Naive thymus-derived CD4-positive, alpha-beta T cell (primary cell): ENCODE measurements at regions of chr3 and their contacts with region 1.

Region 1: DNA sequence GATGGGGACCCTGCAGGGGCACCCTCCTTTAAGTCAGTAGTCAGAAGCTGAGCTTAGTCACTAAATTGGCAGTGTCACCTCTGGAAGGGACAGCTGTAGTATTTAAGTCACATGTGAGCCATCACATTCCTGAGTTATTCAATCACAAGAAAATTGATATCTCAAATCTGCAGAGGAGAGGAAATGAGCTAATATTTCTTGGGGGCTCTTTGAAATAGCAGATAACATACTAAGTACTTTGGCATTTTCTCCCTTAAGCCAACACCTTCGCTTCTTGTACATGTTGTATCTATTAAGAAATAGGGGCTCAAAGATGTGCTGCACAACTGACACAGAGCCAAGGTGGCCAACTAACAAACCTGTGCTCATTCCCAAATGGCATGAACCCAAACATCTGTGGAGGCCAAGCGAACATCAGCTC is 63.1 kb downstream of the ABHD5 start:
- DNase-seq: no peak
- ATAC-seq: no peak
- H3K4me3 ChIP-seq: no peak overlapping the region
- H3K4me3 Mint-ChIP-seq: no peak overlapping the region
- H3K27ac ChIP-seq: no peak overlapping the region
- H3K27ac Mint-ChIP-seq: peak overlapping the region in 3 of 9 donors; percentile 30 to 97 (median 71)
- H3K4me1 ChIP-seq: peaks cover 8 to 41% of the 10 kb centered on the region in 2 donors
- H3K4me1 Mint-ChIP-seq: peaks cover 18 to 55% (median 46%) of the 10 kb centered on the region in 7 donors
- H3K27me3 ChIP-seq: no peaks in the 10 kb centered on the region
- H3K27me3 Mint-ChIP-seq: peaks cover 0 to 10% (median 0%) of the 10 kb centered on the region in 5 donors

Region 2: GRCh38 chr3:43699864-43700263 is 53.9 kb before region 1 on chr3:
- CTCF ChIA-PET with region 1: interaction called, 3 read pairs
- POLR2A ChIA-PET with region 1: no interaction called
- intact Hi-C with region 1: loop called in 1 of 2 experiments (anchors 2 kb)
- DNase-seq: peak in 2 of 9 donors; percentile 8 to 9
- ATAC-seq: peak; percentile 42
- H3K4me3 ChIP-seq: no peak overlapping the region
- H3K4me3 Mint-ChIP-seq: no peak overlapping the region
- H3K27ac ChIP-seq: no peak overlapping the region
- H3K27ac Mint-ChIP-seq: no peak overlapping the region
- H3K4me1 ChIP-seq: no peaks in the 10 kb centered on the region
- H3K4me1 Mint-ChIP-seq: peaks cover 0 to 25% (median 5%) of the 10 kb centered on the region in 7 donors
- H3K27me3 ChIP-seq: no peaks in the 10 kb centered on the region
- H3K27me3 Mint-ChIP-seq: no peaks in the 10 kb centered on the region

Region 3: DNA sequence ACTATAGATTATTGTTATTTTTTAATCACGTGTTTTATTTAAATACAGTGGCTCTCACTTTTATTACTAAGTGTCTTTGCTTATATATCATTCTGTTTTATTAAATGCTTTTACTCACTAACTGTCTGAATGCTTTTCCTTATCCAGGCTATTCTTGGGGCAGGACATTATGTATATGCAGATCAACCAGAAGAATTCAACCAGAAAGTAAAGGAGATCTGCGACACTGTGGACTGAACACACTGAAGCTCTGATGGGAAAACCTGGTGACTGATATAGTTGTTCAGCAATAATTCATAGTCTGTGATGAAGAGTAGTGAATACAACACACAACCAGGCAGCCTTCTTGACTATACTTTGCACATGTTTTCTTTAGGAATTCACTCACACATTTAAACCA is 35.5 kb before region 1 on chr3:
- CTCF ChIA-PET with region 1: no interaction called
- POLR2A ChIA-PET with region 1: no interaction called
- intact Hi-C with region 1: no loop called
- DNase-seq: no peak
- ATAC-seq: no peak
- H3K4me3 ChIP-seq: no peak overlapping the region
- H3K4me3 Mint-ChIP-seq: no peak overlapping the region
- H3K27ac ChIP-seq: no peak overlapping the region
- H3K27ac Mint-ChIP-seq: no peak overlapping the region
- H3K4me1 ChIP-seq: no peaks in the 10 kb centered on the region
- H3K4me1 Mint-ChIP-seq: no peaks in the 10 kb centered on the region
- H3K27me3 ChIP-seq: no peaks in the 10 kb centered on the region
- H3K27me3 Mint-ChIP-seq: no peaks in the 10 kb centered on the region

Region 4: DNA sequence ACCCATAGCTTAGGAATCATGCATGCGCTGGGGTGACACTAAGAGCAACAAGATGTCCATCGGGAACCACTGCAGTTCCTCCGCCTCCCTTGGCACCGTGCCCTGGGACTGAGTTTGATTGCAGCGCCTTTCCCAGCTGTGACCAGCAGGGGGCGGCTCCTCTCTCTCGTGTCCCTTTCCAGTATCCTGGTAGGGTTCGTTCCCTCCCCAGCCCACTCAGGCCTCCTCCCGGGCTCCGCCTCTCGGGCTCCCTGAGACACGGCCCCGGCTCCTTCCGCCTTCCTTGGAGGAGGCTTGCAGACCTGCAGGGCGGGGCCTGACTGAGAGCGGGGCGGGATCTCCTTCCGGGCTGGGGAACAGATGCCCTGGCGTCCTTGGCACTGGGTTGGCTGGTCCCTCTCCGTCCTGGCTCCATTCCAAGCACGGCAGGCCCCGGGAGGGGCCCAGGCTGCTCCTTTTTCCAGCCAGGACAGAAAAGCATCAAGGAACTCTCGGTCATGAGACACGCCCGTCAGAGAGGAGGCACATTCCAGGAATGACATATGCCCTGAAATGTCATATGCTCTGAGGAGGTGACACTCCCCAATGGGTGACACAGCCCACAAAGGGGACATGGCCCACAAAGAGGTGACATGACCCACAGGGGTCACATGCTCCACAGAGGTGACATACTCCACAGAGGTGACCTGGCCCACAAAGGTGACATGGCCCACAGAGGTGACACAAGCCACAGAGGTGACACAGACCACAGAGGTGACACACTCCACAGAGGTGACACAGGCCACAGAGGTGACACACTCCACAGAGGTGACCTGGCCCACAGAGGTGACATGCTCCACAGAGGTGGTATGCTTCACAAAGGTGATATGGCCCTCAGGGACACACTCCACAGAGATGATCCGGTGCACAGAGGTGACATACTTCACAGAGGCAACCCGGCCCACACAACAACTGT is 16.0 kb after region 1 on chr3:
- CTCF ChIA-PET with region 1: interaction called, 10 read pairs
- POLR2A ChIA-PET with region 1: interaction called, 11 read pairs
- intact Hi-C with region 1: loop called in 1 of 2 experiments (anchors 1 kb)
- DNase-seq: peak; percentile 48 to 76 (median 68)
- ATAC-seq: peak; percentile 75
- H3K4me3 ChIP-seq: no peak overlapping the region
- H3K4me3 Mint-ChIP-seq: peak overlapping the region in 9 of 10 donors; percentile 0 to 66 (median 35)
- H3K27ac ChIP-seq: no peak overlapping the region
- H3K27ac Mint-ChIP-seq: peak overlapping the region in 2 of 9 donors; percentile 15 to 17
- H3K4me1 ChIP-seq: peaks cover 14 to 20% of the 10 kb centered on the region in 2 donors
- H3K4me1 Mint-ChIP-seq: peaks cover 5 to 20% (median 10%) of the 10 kb centered on the region in 7 donors
- H3K27me3 ChIP-seq: no peaks in the 10 kb centered on the region
- H3K27me3 Mint-ChIP-seq: peaks cover 0 to 21% (median 0%) of the 10 kb centered on the region in 5 donors